Activated CD8-positive, alpha-beta memory T cell treated with anti-CD3 and anti-CD28 coated beads, Interleukin-2, amount 10 ng/mL, durations not matched to agents 7 days and 5 days (primary cell): ENCODE measurements at regions of chr5 and their contacts with region 1.

Region 1: DNA sequence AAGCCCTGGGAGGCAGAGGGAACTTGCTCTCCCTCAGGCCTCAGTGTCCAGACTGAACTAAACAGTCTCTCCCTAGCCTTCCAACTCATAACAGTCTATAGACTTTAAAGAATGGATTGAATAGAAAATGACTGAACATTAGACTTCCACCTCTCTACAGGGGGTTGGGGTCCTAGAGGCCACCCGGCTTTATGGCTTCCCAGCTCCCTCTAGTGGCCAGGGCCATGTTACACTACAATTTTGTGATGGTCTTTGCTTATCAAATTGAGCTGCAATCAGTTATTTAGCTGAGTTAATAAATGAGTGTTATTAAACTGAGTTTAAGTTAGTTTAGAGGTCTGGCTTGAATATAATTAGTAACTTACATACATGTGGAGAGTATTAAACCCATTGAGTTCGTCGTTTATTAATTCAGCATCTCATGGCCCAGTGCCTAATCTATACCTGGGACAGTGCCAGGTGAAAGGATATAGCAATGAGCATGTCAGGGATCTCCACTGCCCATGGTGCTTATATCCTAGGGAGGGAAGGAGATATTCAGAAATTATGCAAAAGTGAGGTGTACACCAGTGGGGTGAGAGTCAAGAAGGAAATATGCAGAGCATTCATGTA is 105.2 kb downstream of the SH3TC2 start:
- DNase-seq: peak; percentile 64
- ATAC-seq: peak; percentile 51
- H3K4me3 Mint-ChIP-seq: no peak overlapping the region
- H3K27ac Mint-ChIP-seq: no peak overlapping the region
- H3K4me1 Mint-ChIP-seq: no peaks in the 10 kb centered on the region
- H3K27me3 Mint-ChIP-seq: peaks cover 2% of the 10 kb centered on the region

Region 2: DNA sequence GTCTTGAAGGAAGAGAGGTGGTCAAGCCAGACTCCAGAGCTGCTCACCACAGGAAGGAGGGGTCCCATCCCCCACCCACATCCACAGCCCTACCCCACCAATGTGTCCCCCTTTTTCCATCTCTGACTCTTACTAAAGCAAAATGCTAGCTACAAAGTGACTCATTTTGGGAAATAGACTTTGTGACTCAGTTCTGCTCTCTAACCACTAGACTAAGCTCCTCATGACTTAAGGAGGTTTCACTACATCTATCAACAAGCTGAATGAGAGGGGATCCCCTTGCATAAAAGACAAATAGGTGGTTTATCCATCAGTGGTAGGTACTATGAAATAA is 166.4 kb before region 1 on chr5:
- CTCF ChIA-PET with region 1: interaction called, 12 read pairs
- DNase-seq: peak; percentile 78
- ATAC-seq: peak; percentile 92
- H3K4me3 Mint-ChIP-seq: no peak overlapping the region
- H3K27ac Mint-ChIP-seq: peak overlapping the region; percentile 26
- H3K4me1 Mint-ChIP-seq: peaks cover 39% of the 10 kb centered on the region
- H3K27me3 Mint-ChIP-seq: peaks cover 21% of the 10 kb centered on the region

Region 3: DNA sequence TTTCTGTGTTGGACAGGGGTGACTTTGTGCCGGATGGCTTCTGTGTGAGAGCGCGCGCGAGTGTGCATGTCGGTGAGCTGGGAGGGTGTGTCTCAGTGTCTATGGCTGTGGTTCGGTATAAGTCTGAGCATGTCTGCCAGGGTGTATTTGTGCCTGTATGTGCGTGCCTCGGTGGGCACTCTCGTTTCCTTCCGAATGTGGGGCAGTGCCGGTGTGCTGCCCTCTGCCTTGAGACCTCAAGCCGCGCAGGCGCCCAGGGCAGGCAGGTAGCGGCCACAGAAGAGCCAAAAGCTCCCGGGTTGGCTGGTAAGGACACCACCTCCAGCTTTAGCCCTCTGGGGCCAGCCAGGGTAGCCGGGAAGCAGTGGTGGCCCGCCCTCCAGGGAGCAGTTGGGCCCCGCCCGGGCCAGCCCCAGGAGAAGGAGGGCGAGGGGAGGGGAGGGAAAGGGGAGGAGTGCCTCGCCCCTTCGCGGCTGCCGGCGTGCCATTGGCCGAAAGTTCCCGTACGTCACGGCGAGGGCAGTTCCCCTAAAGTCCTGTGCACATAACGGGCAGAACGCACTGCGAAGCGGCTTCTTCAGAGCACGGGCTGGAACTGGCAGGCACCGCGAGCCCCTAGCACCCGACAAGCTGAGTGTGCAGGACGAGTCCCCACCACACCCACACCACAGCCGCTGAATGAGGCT is 131.5 kb before region 1 on chr5 and contains the start of gene ADRB2:
- CTCF ChIA-PET with region 1: interaction called, 41 read pairs
- DNase-seq: peak; percentile 96
- ATAC-seq: peak; percentile 95
- H3K4me3 Mint-ChIP-seq: peak within 1 kb of the TSS; percentile 88
- H3K27ac Mint-ChIP-seq: peak within 1 kb of the TSS; percentile 91
- H3K4me1 Mint-ChIP-seq: peaks cover 47% of the 10 kb centered on the region
- H3K27me3 Mint-ChIP-seq: peaks cover 36% of the 10 kb centered on the region
- total RNA-seq, gene ADRB2: 1.7 to 4.4 TPM

Region 4: DNA sequence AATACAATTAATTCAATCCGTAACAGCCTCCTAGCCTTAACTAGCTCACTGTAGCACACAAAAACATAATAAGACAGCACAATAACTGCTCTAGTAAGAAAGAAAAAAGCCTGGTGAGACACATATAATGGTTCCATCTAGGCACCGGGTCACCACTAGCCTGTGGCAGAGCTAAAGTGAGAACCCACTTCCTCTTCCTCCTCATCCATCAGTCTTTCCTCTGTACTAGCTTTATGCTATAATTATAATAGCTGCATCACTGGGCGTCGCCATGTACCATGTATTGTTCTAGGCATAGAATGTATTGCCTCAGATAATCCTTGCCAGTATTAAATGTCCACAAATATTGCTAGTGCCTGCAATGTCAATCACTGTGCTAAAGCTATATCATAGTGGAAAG is 108.2 kb before region 1 on chr5:
- CTCF ChIA-PET with region 1: interaction called, 12 read pairs
- DNase-seq: peak; percentile 83
- ATAC-seq: peak; percentile 86
- H3K4me3 Mint-ChIP-seq: peak overlapping the region; percentile 17
- H3K27ac Mint-ChIP-seq: peak overlapping the region; percentile 97
- H3K4me1 Mint-ChIP-seq: peaks cover 82% of the 10 kb centered on the region
- H3K27me3 Mint-ChIP-seq: no peaks in the 10 kb centered on the region

Region 5: GRCh38 chr5:149063017-149063687 is 105.5 kb after region 1 on chr5 and contains the start of gene SH3TC2:
- CTCF ChIA-PET with region 1: no interaction called
- DNase-seq: no peak
- ATAC-seq: no peak
- H3K4me3 Mint-ChIP-seq: no peak within 1 kb of the TSS
- H3K27ac Mint-ChIP-seq: no peak within 1 kb of the TSS
- H3K4me1 Mint-ChIP-seq: no peaks in the 10 kb centered on the region
- H3K27me3 Mint-ChIP-seq: peaks cover 17% of the 10 kb centered on the region
- total RNA-seq, gene SH3TC2: not detected